ENCODE measurements at regions of chr12 and their contacts with region 1.

Region 1: GRCh38 chr12:43728117-43728516 is 30.5 kb downstream of the PUS7L start:
- DNase-seq: no peak
- H3K4me3 Mint-ChIP-seq: no peak overlapping the region
- H3K27ac Mint-ChIP-seq: no peak overlapping the region
- H3K4me1 Mint-ChIP-seq: peaks cover 6% of the 10 kb centered on the region
- H3K27me3 Mint-ChIP-seq: no peaks in the 10 kb centered on the region

Region 2: GRCh38 chr12:43444940-43445564 is 283.1 kb before region 1 on chr12:
- intact Hi-C with region 1: loop called (anchors 10 kb)
- DNase-seq: peak; percentile 11
- H3K4me3 Mint-ChIP-seq: no peak overlapping the region
- H3K27ac Mint-ChIP-seq: no peak overlapping the region
- H3K4me1 Mint-ChIP-seq: no peaks in the 10 kb centered on the region
- H3K27me3 Mint-ChIP-seq: no peaks in the 10 kb centered on the region